Activated T-helper 1 cell treated with anti-CD3 and anti-CD28 coated beads, Interleukin-12 subunit alpha, Interleukin-12 subunit beta, Interleukin-2, Interleukin-4 antibody, amounts not matched to agents 30 ng/mL and 10 ng/mL and 1 ng/mL, durations not matched to agents 14 hours and 24 hours and 36 hours (primary cell): ENCODE measurements at regions of chr5 and their contacts with region 1.

Region 1: GRCh38 chr5:160439205-160439600 is 17.5 kb downstream of the PTTG1 start:
- DNase-seq: peak; percentile 81
- H3K4me3 Mint-ChIP-seq: peak overlapping the region; percentile 82
- H3K27ac Mint-ChIP-seq: peak overlapping the region; percentile 96
- H3K4me1 Mint-ChIP-seq: peaks cover 74% of the 10 kb centered on the region
- H3K27me3 Mint-ChIP-seq: peaks cover 5% of the 10 kb centered on the region

Region 2: GRCh38 chr5:160418561-160419457 is 20.4 kb before region 1 on chr5 and contains the start of gene SLU7:
- intact Hi-C with region 1: loop called (anchors 1 kb)
- DNase-seq: peak; percentile 91
- H3K4me3 Mint-ChIP-seq: peak within 1 kb of the TSS; percentile 94
- H3K27ac Mint-ChIP-seq: peak within 1 kb of the TSS; percentile 95
- H3K4me1 Mint-ChIP-seq: peaks cover 77% of the 10 kb centered on the region
- H3K27me3 Mint-ChIP-seq: no peaks in the 10 kb centered on the region
- total RNA-seq, gene SLU7: 37.4 and 47.4 TPM in 2 replicates

Region 3: GRCh38 chr5:160467555-160468362 is 28.6 kb after region 1 on chr5:
- intact Hi-C with region 1: loop called (anchors 1 kb)
- DNase-seq: peak; percentile 85
- H3K4me3 Mint-ChIP-seq: peak overlapping the region; percentile 100
- H3K27ac Mint-ChIP-seq: peak overlapping the region; percentile 100
- H3K4me1 Mint-ChIP-seq: peaks cover 68% of the 10 kb centered on the region
- H3K27me3 Mint-ChIP-seq: no peaks in the 10 kb centered on the region

Region 4: GRCh38 chr5:160539431-160539830 is 100.2 kb after region 1 on chr5:
- intact Hi-C with region 1: loop called (anchors 1 kb)
- DNase-seq: no peak
- H3K4me3 Mint-ChIP-seq: no peak overlapping the region
- H3K27ac Mint-ChIP-seq: no peak overlapping the region
- H3K4me1 Mint-ChIP-seq: peaks cover 19% of the 10 kb centered on the region
- H3K27me3 Mint-ChIP-seq: no peaks in the 10 kb centered on the region

Region 5: DNA sequence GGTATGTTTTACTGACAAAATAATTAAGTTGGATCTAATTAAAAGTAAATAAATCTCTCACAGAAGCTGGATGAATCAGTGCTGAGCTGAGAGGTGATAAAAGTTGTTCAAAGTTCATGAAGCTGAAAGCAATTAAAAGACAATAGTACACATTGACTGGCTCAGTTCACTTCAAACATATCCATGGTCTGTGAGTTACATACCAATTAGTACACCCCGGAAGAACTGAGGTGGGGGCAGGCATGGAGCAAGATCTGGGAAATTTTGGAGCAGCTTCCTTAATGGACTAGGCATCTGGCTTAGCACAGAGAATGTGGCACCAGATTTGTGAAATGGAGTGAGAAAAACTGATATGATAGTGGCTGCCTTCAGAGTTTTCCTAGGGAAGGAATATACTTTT is 260.1 kb after region 1 on chr5:
- intact Hi-C with region 1: no loop called
- DNase-seq: no peak
- H3K4me3 Mint-ChIP-seq: no peak overlapping the region
- H3K27ac Mint-ChIP-seq: no peak overlapping the region
- H3K4me1 Mint-ChIP-seq: no peaks in the 10 kb centered on the region
- H3K27me3 Mint-ChIP-seq: no peaks in the 10 kb centered on the region

Region 6: DNA sequence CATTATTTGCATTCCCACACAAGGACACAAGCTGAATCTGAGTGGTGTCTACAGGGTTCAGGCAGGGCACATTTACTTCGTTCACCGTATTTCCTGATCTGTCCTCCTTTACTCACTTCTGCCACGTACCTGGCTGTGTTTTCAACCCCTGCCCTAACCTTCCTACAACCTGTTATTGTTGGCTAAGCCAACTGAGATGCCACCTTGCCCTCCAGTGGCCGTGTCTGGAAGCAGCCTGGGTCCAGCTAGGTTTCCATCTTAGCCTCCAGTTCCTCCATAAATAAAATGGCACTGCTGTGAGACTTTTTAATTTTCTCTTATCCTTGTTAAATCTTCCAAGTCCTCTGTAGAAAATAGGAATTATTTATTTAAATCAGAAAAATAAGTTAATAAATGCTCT is 348.0 kb after region 1 on chr5:
- intact Hi-C with region 1: loop called (anchors 1 kb)
- DNase-seq: no peak
- H3K4me3 Mint-ChIP-seq: no peak overlapping the region
- H3K27ac Mint-ChIP-seq: no peak overlapping the region
- H3K4me1 Mint-ChIP-seq: no peaks in the 10 kb centered on the region
- H3K27me3 Mint-ChIP-seq: peaks cover 2% of the 10 kb centered on the region

Region 7: DNA sequence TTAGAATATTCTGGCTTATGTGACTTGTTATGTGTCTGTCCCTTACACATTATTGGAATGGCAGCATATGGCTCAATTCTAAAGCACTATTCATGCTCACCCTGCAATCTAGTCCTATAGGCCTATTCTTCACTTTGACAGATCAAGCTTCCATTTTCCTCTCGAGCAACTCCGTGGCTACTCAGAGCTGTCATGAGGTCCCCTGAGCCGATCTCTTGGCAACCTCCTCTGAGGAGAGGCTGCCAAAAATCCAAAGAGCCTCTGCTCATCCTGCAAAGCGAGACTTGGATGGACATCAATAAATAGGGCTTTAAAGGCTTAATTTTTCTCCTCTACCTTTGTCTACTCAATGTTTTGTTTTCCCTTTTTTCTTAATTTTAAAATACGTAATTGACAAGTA is 943.5 kb after region 1 on chr5:
- intact Hi-C with region 1: loop called (anchors 10 kb)
- DNase-seq: no peak
- H3K4me3 Mint-ChIP-seq: no peak overlapping the region
- H3K27ac Mint-ChIP-seq: no peak overlapping the region
- H3K4me1 Mint-ChIP-seq: no peaks in the 10 kb centered on the region
- H3K27me3 Mint-ChIP-seq: peaks cover 1% of the 10 kb centered on the region